Cardiac septum (tissue), 1 donor: ENCODE measurements at regions of chr3 and their contacts with region 1.

Region 1: DNA sequence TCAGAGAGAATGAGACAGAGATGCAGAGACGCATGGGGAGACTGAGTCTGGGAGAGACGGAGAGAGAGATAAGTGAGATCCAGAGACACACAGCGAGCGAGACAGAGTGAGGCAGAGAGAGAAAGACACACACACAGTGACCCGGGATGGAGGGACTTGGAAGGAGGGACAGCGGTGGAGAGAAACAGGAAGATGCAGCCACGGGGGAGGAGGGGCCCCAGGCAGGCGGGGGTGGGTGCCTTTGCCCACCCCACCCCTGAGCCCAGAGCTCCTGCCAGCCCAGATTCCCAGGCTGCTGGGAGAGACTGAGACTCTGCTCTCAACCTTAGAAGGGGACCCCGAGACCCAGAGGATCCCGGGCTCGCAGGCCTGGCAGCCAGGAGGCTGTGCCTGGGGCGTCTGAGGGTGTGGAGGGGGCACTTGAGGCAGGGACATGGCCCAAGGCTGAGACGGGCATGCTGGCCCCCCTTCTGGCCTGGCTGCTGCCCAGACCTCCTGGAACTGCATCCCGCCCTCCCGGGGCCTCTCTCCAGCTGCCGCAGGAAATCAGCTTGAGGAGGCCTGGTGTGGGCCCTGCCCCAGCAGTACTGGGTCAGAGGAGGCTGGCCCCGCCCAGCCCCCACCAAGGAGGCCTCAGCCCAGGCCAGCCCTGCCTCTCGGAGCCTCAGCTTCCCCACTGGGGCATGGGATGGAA is 18.1 kb downstream of the H1-8 start:
- DNase-seq: peak; percentile 83

Region 2: GRCh38 chr3:129503471-129504291 is 57.4 kb before region 1 on chr3:
- intact Hi-C with region 1: loop called (anchors 5 kb)
- DNase-seq: no peak

Region 3: GRCh38 chr3:129593595-129594339 is 32.7 kb after region 1 on chr3:
- intact Hi-C with region 1: loop called (anchors 2 kb)
- DNase-seq: no peak